Left cardiac atrium (tissue), 4 donors: ENCODE measurements at regions of chr17 and their contacts with region 1.

Region 1: DNA sequence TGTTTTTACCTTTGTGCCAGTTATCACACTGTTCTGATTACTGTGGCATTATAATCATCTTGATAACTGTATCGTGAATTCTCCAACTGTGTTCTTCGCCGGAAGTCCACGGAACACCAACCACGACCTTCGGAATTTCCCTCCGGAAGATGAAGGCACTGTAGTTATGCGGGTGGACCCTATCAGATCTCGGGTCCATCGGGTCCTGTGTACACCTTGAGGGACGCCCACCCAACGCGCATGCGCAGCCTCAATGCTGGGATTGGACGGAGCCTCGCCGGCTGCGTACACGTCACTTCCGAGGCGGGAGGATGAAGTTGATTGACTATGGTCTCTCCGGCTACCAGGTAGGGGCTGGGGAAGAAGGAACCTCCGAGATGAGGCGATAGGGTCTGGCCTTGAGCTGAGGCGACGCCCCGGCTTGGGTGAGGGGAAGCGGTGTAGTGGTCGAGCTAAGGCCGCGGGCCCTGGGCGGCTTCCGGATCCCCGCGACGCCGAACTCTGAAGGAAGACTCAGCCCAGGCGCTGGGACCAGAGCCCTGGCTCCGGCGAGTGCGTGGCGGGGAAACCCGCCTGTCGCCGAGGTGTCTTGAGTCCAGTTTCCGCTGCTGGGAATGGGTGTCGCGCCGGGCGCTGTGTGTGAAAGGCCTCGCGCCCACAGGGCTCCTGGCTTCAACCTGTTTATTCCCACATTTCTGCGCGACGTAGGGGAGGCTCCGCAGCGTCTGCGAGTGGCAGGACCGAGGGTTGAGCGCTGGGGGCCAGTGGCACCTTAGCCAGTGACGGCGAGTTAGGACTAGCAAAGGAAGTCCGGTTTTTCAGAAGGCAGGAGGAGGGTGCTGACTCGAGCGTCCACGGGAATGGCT is at the start of gene DHRS7B:
- DNase-seq: peak; percentile 98
- ATAC-seq: peak; percentile 97 to 99
- total RNA-seq, gene DHRS7B: 25.2 to 39.6 TPM

Region 2: GRCh38 chr17:21214015-21214776 is 87.3 kb after region 1 on chr17 and contains the start of gene TMEM11:
- intact Hi-C with region 1: loop called in 1 of 2 experiments (anchors 5 kb)
- DNase-seq: peak; percentile 98
- ATAC-seq: peak; percentile 97
- total RNA-seq, gene TMEM11: 26.7 to 27.3 TPM

Region 3: GRCh38 chr17:21258590-21258989 is 131.7 kb after region 1 on chr17:
- intact Hi-C with region 1: loop called in 1 of 2 experiments (anchors 5 kb)
- DNase-seq: no peak
- ATAC-seq: no peak

Region 4: GRCh38 chr17:21275579-21276263 is 148.8 kb after region 1 on chr17:
- intact Hi-C with region 1: loop called in 1 of 2 experiments (anchors 5 kb)
- DNase-seq: peak; percentile 95
- ATAC-seq: peak; percentile 95 to 98

Region 5: GRCh38 chr17:21457051-21458026 is 330.5 kb after region 1 on chr17:
- intact Hi-C with region 1: loop called in 1 of 2 experiments (anchors 5 kb)
- DNase-seq: peak; percentile 90
- ATAC-seq: peak; percentile 92 to 94

Region 6: GRCh38 chr17:21511363-21512198 is 384.7 kb after region 1 on chr17:
- intact Hi-C with region 1: loop called in 1 of 2 experiments (anchors 5 kb)
- DNase-seq: peak; percentile 89
- ATAC-seq: peak; percentile 95 to 97